K562 (cell line): ENCODE measurements at regions of chr4 and their contacts with region 1.

Region 1: GRCh38 chr4:140637836-140638235 is 69.1 kb upstream of the UCP1 start:
- DNase-seq: peak; percentile 24 to 60 (median 44)
- ATAC-seq: peak; percentile 92
- H3K4me3 ChIP-seq: no peak overlapping the region
- H3K27ac ChIP-seq: no peak overlapping the region
- H3K4me1 ChIP-seq: peaks cover 0 to 6% of the 10 kb centered on the region in 2 experiments; a peak in 2 of 5 replicates
- H3K27me3 ChIP-seq: peaks cover 14 to 18% of the 10 kb centered on the region in 2 experiments; a peak in 4 of 5 replicates
- CTCF ChIP-seq: peak; percentile 62 to 69 (median 66)
- EP300 ChIP-seq: no peak
- POLR2A ChIP-seq: no peak
- RAD21 ChIP-seq: peak; percentile 41 to 65

Region 2: GRCh38 chr4:140851032-140851636 is 213.3 kb after region 1 on chr4:
- CTCF ChIA-PET with region 1: no interaction called
- POLR2A ChIA-PET with region 1: no interaction called
- in situ Hi-C with region 1: no loop called
- intact Hi-C with region 1: loop called (anchors 5 kb)
- DNase-seq: peak; percentile 53 to 67 (median 60)
- ATAC-seq: peak; percentile 78
- H3K4me3 ChIP-seq: no peak overlapping the region
- H3K27ac ChIP-seq: no peak overlapping the region
- H3K4me1 ChIP-seq: no peaks in the 10 kb centered on the region
- H3K27me3 ChIP-seq: no peaks in the 10 kb centered on the region
- CTCF ChIP-seq: peak; percentile 63 to 80 (median 71); a peak in 5 of 6 replicates
- EP300 ChIP-seq: no peak
- POLR2A ChIP-seq: no peak
- RAD21 ChIP-seq: peak; percentile 71